K562 (cell line): ENCODE measurements at regions of chr3 and their contacts with region 1.

Region 1: GRCh38 chr3:161423911-161424522 is 52.7 kb upstream of the SPTSSB start:
- DNase-seq: peak; percentile 35 to 59 (median 48)
- ATAC-seq: peak; percentile 77
- H3K4me3 ChIP-seq: no peak overlapping the region
- H3K27ac ChIP-seq: no peak overlapping the region
- H3K4me1 ChIP-seq: no peaks in the 10 kb centered on the region
- H3K27me3 ChIP-seq: no peaks in the 10 kb centered on the region
- CTCF ChIP-seq: peak; percentile 26 to 75 (median 41); a peak in 5 of 6 replicates
- EP300 ChIP-seq: no peak
- POLR2A ChIP-seq: no peak
- RAD21 ChIP-seq: peak; percentile 81

Region 2: DNA sequence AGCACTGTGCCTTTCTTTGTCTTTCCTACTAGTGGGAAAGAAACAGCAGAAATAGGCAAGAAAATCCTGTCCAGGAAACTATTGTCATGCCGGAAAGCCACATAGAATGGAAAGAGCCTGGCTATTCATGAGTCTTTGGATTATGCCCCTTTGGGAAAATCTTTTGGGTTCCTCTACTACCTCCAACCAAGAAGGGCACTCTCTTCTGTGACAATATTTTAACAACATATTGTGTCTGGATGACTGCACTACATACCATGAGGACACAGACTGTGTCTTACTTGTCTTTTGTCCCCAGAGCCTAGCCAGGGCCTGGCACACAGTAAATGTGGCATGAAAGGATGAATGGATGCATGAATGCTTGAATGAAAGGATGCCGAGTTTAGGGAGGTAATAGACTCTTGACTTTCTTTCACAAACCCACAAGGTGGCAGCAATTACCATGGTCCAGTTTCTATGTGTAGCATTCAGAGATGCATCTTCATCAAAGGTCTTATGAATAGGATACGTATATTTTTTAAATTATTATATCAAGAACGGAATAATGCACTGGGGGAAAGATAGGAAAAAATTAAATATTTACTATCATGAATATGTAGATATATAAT is 716.7 kb before region 1 on chr3:
- CTCF ChIA-PET with region 1: no interaction called
- POLR2A ChIA-PET with region 1: no interaction called
- in situ Hi-C with region 1: no loop called
- intact Hi-C with region 1: loop called (anchors 1 kb)
- DNase-seq: peak in 2 of 4 experiments; percentile 27 to 47
- ATAC-seq: peak; percentile 73
- H3K4me3 ChIP-seq: no peak overlapping the region
- H3K27ac ChIP-seq: no peak overlapping the region
- H3K4me1 ChIP-seq: no peaks in the 10 kb centered on the region
- H3K27me3 ChIP-seq: no peaks in the 10 kb centered on the region
- CTCF ChIP-seq: peak; percentile 19 to 67 (median 44); a peak in 4 of 6 replicates
- EP300 ChIP-seq: no peak
- POLR2A ChIP-seq: no peak
- RAD21 ChIP-seq: peak; percentile 71 to 73

Region 3: GRCh38 chr3:160921020-160921635 is 502.9 kb before region 1 on chr3:
- CTCF ChIA-PET with region 1: interaction called, 5 read pairs
- POLR2A ChIA-PET with region 1: no interaction called
- in situ Hi-C with region 1: no loop called
- intact Hi-C with region 1: loop called (anchors 1 kb)
- DNase-seq: peak; percentile 32 to 55 (median 46)
- ATAC-seq: peak; percentile 96
- H3K4me3 ChIP-seq: no peak overlapping the region
- H3K27ac ChIP-seq: no peak overlapping the region
- H3K4me1 ChIP-seq: no peaks in the 10 kb centered on the region
- H3K27me3 ChIP-seq: no peaks in the 10 kb centered on the region
- CTCF ChIP-seq: peak; percentile 68 to 86 (median 74)
- EP300 ChIP-seq: no peak
- POLR2A ChIP-seq: no peak
- RAD21 ChIP-seq: peak; percentile 75 to 80